ENCODE measurements at regions of chr4 and their contacts with region 1.

Region 1: GRCh38 chr4:56799824-56800756 is 21.4 kb downstream of the SPINK2 start:
- DNase-seq: peak; percentile 92
- ATAC-seq: peak; percentile 94
- H3K4me3 Mint-ChIP-seq: peak overlapping the region; percentile 83
- H3K27ac Mint-ChIP-seq: peak overlapping the region; percentile 77
- H3K4me1 Mint-ChIP-seq: peaks cover 32% of the 10 kb centered on the region
- H3K27me3 Mint-ChIP-seq: peaks cover 2% of the 10 kb centered on the region

Region 2: GRCh38 chr4:56575820-56576429 is 224.2 kb before region 1 on chr4:
- CTCF ChIA-PET with region 1: interaction called, 13 read pairs
- DNase-seq: no peak
- ATAC-seq: peak; percentile 51
- H3K4me3 Mint-ChIP-seq: no peak overlapping the region
- H3K27ac Mint-ChIP-seq: no peak overlapping the region
- H3K4me1 Mint-ChIP-seq: peaks cover 9% of the 10 kb centered on the region
- H3K27me3 Mint-ChIP-seq: peaks cover 2% of the 10 kb centered on the region

Region 3: GRCh38 chr4:56655209-56655626 is 144.9 kb before region 1 on chr4:
- CTCF ChIA-PET with region 1: interaction called, 11 read pairs
- DNase-seq: peak; percentile 56
- ATAC-seq: peak; percentile 16
- H3K4me3 Mint-ChIP-seq: peak overlapping the region; percentile 99
- H3K27ac Mint-ChIP-seq: peak overlapping the region; percentile 95
- H3K4me1 Mint-ChIP-seq: peaks cover 57% of the 10 kb centered on the region
- H3K27me3 Mint-ChIP-seq: peaks cover 11% of the 10 kb centered on the region

Region 4: GRCh38 chr4:56668298-56668697 is 131.8 kb before region 1 on chr4:
- CTCF ChIA-PET with region 1: interaction called, 10 read pairs
- DNase-seq: no peak
- ATAC-seq: no peak
- H3K4me3 Mint-ChIP-seq: no peak overlapping the region
- H3K27ac Mint-ChIP-seq: no peak overlapping the region
- H3K4me1 Mint-ChIP-seq: peaks cover 3% of the 10 kb centered on the region
- H3K27me3 Mint-ChIP-seq: peaks cover 8% of the 10 kb centered on the region

Region 5: DNA sequence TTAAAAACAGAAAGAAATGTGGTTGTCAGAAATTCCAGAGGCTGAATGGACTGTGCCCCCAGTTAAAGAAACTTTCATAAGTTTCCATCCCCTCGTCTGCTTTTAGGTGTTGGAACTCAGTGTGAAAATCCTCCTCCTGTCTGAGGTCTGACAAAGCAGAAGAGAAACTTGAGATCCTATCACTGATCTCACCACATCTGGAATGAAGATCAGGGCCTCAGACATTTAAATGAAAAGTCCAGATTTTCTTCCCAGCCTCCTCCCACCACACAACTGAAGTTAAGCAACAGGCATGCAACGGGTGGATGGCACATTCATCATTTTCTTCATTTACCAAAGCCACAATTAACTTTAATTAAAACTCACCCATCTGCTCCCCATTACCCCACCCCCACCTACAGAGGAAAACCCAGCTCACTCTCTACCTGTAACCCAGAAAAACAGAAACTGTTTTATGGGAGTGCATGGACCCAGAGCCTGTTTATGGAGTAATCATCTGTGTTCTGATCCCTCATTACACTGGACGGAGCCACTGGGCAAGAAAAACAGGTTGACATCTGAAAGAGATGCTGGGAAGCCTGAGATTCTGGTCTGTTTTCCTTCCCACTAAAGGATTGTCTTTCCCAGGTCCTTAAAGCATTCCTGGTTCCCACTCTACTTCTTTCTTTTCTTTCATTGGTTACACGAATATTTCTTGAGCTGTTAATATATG is 60.9 kb before region 1 on chr4:
- CTCF ChIA-PET with region 1: no interaction called
- DNase-seq: no peak
- ATAC-seq: no peak
- H3K4me3 Mint-ChIP-seq: no peak overlapping the region
- H3K27ac Mint-ChIP-seq: no peak overlapping the region
- H3K4me1 Mint-ChIP-seq: no peaks in the 10 kb centered on the region
- H3K27me3 Mint-ChIP-seq: no peaks in the 10 kb centered on the region

Region 6: DNA sequence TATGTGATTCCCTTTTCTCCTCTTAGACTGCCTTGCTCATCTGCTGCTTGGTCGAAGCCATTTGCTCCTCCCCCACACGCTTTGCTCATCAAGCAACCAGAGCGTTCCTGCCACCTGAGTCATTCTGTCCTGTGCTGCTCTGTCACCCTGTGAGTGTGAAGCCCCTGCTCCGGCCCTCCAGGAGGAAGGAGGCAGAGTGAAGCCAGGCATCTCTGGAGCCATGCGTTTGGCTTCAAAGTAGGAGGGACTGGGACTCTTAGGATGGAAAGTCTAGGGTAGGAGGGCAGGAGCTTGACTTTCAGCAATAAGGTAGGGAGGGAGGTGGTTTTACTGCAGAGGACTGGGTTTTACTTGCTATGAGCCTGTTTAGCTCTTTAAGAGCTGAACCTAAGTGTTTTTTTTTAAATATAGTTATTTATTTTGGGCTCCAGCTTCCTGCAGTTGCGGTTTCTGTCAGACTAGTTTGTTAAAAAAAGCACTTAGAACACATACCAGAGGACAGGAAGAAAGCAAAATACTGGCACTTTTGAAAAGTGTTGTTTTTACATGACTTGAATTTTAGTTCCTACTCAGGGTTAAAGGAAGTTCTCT is 42.2 kb before region 1 on chr4:
- CTCF ChIA-PET with region 1: interaction called, 21 read pairs
- DNase-seq: peak; percentile 92
- ATAC-seq: peak; percentile 98
- H3K4me3 Mint-ChIP-seq: peak overlapping the region; percentile 67
- H3K27ac Mint-ChIP-seq: peak overlapping the region; percentile 100
- H3K4me1 Mint-ChIP-seq: peaks cover 50% of the 10 kb centered on the region
- H3K27me3 Mint-ChIP-seq: no peaks in the 10 kb centered on the region

Region 7: GRCh38 chr4:56817840-56818491 is 17.9 kb after region 1 on chr4:
- CTCF ChIA-PET with region 1: interaction called, 10 read pairs
- DNase-seq: peak; percentile 62
- ATAC-seq: peak; percentile 82
- H3K4me3 Mint-ChIP-seq: peak overlapping the region; percentile 1
- H3K27ac Mint-ChIP-seq: peak overlapping the region; percentile 71
- H3K4me1 Mint-ChIP-seq: peaks cover 33% of the 10 kb centered on the region
- H3K27me3 Mint-ChIP-seq: peaks cover 38% of the 10 kb centered on the region

Region 8: GRCh38 chr4:56843421-56843899 is 43.4 kb after region 1 on chr4:
- CTCF ChIA-PET with region 1: interaction called, 34 read pairs
- DNase-seq: no peak
- ATAC-seq: no peak
- H3K4me3 Mint-ChIP-seq: no peak overlapping the region
- H3K27ac Mint-ChIP-seq: no peak overlapping the region
- H3K4me1 Mint-ChIP-seq: no peaks in the 10 kb centered on the region
- H3K27me3 Mint-ChIP-seq: no peaks in the 10 kb centered on the region

Measured in activated CD8-positive, alpha-beta memory T cell treated with anti-CD3 and anti-CD28 coated beads, Interleukin-2, amount 10 ng/mL, durations not matched to agents 7 days and 5 days (primary cell).